ENCODE measurements at regions of chr15 and their contacts with region 1.

Region 1: GRCh38 chr15:42704492-42704926 is 32.4 kb downstream of the CDAN1 start:
- DNase-seq: peak; percentile 39 to 70
- ATAC-seq: peak; percentile 96

Region 2: GRCh38 chr15:42413920-42414319 is 290.6 kb before region 1 on chr15:
- intact Hi-C with region 1: no loop called
- DNase-seq: no peak
- ATAC-seq: no peak

Region 3: DNA sequence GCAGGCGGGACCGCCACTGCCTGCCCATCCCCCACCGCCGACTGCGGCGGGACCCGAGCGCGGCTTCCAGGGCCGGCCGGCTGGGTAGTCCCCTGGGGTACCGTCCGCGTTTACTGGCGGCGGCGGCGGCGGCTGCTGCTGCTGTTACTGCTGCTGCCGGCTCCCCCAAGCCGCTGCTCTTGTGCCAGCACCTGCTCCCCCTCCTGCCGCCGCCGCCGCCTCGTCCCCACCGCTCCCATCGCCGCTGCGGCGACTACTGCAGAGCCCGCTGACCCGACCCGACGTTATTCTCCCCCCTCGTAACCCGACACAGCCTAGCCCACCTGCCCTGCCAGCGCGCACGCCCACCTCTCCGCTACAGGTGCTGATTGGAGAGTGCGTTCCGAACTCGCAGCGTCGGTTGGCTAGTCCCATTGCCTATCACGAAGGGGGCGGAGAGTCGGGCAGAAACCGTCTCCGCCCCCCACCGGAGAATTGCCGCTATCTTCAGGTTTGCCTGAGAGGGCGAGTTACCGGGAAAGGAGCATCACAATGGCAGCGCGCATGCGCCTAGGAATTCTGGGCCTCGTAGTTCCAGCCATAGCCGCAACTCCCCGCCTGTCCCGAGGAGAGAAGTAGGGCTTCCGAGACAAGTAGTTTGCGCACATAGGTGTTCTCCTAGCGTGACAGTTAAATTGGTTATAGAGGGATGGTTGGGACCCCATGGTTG is 216.2 kb after region 1 on chr15 and contains the start of gene TTBK2:
- intact Hi-C with region 1: loop called in 1 of 2 experiments (anchors 10 kb)
- DNase-seq: peak; percentile 99
- ATAC-seq: peak; percentile 98
- total RNA-seq, gene TTBK2: 9.7 to 12.3 TPM

Measured in left colon (tissue), 2 donors.